CD8-positive, alpha-beta T cell (primary cell): ENCODE measurements at regions of chr4 and their contacts with region 1.

Region 1: DNA sequence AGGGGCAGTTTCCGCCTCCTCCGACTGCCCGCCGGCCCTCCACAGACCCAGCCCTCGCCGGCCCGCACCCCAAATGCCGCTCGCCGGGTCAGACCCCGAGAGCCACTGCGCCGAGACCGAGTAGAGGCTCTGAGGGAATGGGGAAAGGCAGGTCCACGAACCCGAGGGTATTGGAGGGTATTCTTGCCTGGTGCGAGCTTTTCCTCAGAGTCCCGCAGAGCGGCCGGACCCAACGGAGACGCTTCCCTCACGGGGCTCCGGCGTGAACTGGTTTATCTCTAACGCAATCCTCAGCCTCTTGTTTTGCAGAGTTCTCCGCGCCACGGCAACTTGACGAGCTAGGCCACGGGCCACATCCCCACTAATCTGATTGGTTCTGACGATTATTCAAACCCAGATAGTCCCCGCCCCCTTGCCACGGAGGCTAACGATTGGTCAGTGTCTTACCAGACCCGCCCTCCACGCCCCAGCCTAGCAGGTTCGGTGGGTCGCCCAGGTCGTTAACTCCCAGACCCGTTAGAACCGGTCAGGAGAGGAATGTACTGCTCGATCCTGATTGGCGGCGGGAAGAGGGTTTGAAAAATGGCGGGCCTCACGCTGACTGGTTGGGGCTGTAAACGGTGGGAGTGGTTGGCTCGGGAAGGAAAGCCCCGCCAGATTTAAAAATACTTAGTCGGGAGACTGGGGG is at the start of gene HMGB2:
- DNase-seq: peak; percentile 99 to 100 (median 100)
- ATAC-seq: peak; percentile 93
- H3K4me3 ChIP-seq: peak within 1 kb of the TSS; percentile 88 to 94
- H3K4me3 Mint-ChIP-seq: peak within 1 kb of the TSS; percentile 99
- H3K27ac ChIP-seq: peak within 1 kb of the TSS; percentile 94 to 96
- H3K27ac Mint-ChIP-seq: peak within 1 kb of the TSS; percentile 97
- H3K4me1 ChIP-seq: peaks cover 22% of the 10 kb centered on the region
- H3K4me1 Mint-ChIP-seq: peaks cover 23% of the 10 kb centered on the region
- H3K27me3 ChIP-seq: no peaks in the 10 kb centered on the region
- H3K27me3 Mint-ChIP-seq: peaks cover 10% of the 10 kb centered on the region
- CTCF ChIP-seq: no peak
- total RNA-seq, gene HMGB2: 172 to 179 TPM

Region 2: DNA sequence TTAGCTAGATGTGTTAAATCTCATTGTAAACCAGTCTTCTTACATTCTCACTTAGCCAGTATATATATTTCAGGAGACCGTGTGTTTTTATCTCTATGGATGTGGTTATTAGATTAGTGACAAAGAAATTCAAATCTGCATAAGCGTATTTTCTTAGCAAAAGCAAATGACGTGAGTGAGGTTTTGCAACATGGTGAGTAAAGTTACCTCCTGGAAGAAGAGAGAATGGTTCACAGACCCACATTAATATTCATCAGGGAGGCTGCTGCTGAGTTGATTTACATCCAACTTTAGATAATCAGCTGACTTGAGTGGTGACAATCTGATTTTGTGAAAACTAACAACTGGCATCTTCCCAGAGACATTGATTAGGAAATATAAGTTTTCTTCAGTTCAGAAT is 755.5 kb before region 1 on chr4:
- CTCF ChIA-PET with region 1: no interaction called
- POLR2A ChIA-PET with region 1: no interaction called
- intact Hi-C with region 1: no loop called
- DNase-seq: no peak
- ATAC-seq: no peak
- H3K4me3 ChIP-seq: no peak overlapping the region
- H3K4me3 Mint-ChIP-seq: no peak overlapping the region
- H3K27ac ChIP-seq: no peak overlapping the region
- H3K27ac Mint-ChIP-seq: no peak overlapping the region
- H3K4me1 ChIP-seq: no peaks in the 10 kb centered on the region
- H3K4me1 Mint-ChIP-seq: no peaks in the 10 kb centered on the region
- H3K27me3 ChIP-seq: no peaks in the 10 kb centered on the region
- H3K27me3 Mint-ChIP-seq: no peaks in the 10 kb centered on the region
- CTCF ChIP-seq: no peak

Region 3: DNA sequence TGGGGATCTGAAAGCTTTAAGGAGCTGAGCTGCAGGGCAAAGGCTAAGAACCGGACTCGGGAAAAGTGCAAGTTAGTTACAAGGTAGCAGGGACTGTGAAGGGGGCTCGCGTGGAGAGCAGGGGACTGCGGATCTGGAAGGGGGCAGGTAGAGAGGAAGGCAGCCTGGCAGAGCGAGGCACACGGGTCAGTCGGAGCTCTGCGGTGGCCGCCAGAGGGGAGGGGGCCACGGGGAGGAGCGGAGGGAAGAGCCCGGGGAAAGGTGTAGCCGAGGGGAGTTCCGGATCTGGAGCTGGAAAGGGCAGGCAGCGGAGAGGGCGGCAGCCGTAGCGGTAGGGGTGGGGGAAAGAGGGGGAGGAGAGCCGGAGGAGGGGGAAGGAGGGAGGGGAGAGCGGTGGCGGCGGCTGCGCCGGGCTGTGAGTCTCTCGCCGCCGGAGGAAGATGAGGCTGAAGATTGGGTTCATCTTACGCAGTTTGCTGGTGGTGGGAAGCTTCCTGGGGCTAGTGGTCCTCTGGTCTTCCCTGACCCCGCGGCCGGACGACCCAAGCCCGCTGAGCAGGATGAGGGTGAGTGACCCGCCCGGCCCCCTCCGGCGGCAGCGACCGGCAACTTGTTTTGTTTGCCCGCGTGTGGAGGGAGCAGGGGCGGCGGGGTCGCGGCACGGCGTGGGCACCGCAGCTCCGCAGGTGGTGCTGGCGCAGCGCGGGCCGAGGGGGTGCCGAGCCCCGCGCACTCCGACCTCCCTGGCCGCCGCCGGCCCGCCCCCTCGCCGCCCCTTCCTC is 165.6 kb before region 1 on chr4 and contains the start of gene GALNT7:
- CTCF ChIA-PET with region 1: interaction called, 3 read pairs
- POLR2A ChIA-PET with region 1: interaction called, 17 read pairs
- intact Hi-C with region 1: loop called in 1 of 2 experiments (anchors 5 kb)
- DNase-seq: peak in 8 of 9 experiments; percentile 43 to 81 (median 66)
- ATAC-seq: peak; percentile 61
- H3K4me3 ChIP-seq: peak within 1 kb of the TSS; percentile 65 to 89
- H3K4me3 Mint-ChIP-seq: peak within 1 kb of the TSS; percentile 96
- H3K27ac ChIP-seq: peak within 1 kb of the TSS; percentile 42 to 68
- H3K27ac Mint-ChIP-seq: peak within 1 kb of the TSS; percentile 94
- H3K4me1 ChIP-seq: peaks cover 18% of the 10 kb centered on the region
- H3K4me1 Mint-ChIP-seq: peaks cover 48% of the 10 kb centered on the region
- H3K27me3 ChIP-seq: no peaks in the 10 kb centered on the region
- H3K27me3 Mint-ChIP-seq: no peaks in the 10 kb centered on the region
- CTCF ChIP-seq: no peak
- total RNA-seq, gene GALNT7: 4.4 to 7.3 TPM

Region 4: DNA sequence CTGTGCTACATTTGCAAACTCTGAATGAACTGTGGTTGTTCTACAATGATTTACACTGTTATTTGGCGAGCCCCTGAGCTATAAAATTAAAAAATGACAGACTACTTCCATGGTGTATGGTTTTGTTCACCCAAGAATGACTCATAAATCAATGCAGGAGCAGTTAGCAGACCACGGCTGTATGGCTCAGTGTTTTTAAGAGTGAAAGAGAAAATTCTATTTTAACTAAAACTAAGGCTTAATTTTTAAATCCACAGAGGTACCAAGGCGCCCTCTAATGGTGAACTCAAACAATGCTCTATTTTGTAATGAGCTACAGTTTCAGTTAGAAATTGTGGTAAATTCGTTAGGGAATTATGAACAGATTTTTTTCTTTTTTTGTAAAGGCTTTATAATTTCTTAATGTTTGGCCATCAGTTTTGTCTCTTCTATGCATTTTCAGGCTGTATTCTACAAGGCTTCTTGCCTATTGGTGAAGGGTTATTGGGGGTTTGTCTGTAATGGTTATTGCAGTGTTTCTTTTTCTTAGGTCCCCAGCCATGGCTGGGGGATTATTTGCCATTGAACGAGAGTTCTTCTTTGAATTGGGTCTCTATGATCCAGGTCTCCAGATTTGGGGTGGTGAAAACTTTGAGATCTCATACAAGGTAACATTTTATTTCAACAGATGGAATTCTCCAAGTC is 32.6 kb before region 1 on chr4:
- CTCF ChIA-PET with region 1: no interaction called
- POLR2A ChIA-PET with region 1: no interaction called
- intact Hi-C with region 1: no loop called
- DNase-seq: peak in 2 of 9 experiments; percentile 37 to 48
- ATAC-seq: peak; percentile 51
- H3K4me3 ChIP-seq: no peak overlapping the region
- H3K4me3 Mint-ChIP-seq: no peak overlapping the region
- H3K27ac ChIP-seq: no peak overlapping the region
- H3K27ac Mint-ChIP-seq: peak overlapping the region; percentile 4
- H3K4me1 ChIP-seq: no peaks in the 10 kb centered on the region
- H3K4me1 Mint-ChIP-seq: no peaks in the 10 kb centered on the region
- H3K27me3 ChIP-seq: no peaks in the 10 kb centered on the region
- H3K27me3 Mint-ChIP-seq: no peaks in the 10 kb centered on the region
- CTCF ChIP-seq: peak; percentile 90

Region 5: DNA sequence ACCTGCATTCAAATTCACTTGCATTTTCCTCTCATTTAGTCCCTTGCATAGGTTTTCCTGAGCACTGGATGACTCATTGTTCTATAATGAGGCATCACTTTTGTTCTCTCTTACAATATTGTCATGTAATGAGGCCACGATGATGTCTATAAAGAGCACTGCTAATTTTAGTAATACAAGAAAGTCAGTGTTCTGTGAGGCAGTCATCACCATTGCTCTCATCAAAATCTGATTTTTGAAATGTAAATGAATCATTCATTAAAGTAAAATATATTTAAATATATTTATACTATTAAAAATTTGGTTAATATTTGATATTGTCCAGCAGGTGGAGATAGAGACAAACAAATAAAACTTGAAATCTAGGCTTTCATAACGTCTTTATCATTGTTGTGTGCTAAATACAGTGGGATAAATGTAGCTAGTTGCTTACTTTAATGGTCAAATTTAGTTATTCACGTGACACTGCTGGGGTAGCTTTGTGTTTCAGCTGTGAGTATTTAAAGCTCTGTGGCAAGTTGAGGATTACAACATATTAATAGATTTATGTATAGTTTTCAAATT is 15.5 kb before region 1 on chr4:
- CTCF ChIA-PET with region 1: interaction called, 23 read pairs
- POLR2A ChIA-PET with region 1: interaction called, 8 read pairs
- intact Hi-C with region 1: loop called in 1 of 2 experiments (anchors 2 kb)
- DNase-seq: peak in 2 of 9 experiments; percentile 48 to 60
- ATAC-seq: peak; percentile 66
- H3K4me3 ChIP-seq: no peak overlapping the region
- H3K4me3 Mint-ChIP-seq: no peak overlapping the region
- H3K27ac ChIP-seq: no peak overlapping the region
- H3K27ac Mint-ChIP-seq: no peak overlapping the region
- H3K4me1 ChIP-seq: no peaks in the 10 kb centered on the region
- H3K4me1 Mint-ChIP-seq: no peaks in the 10 kb centered on the region
- H3K27me3 ChIP-seq: no peaks in the 10 kb centered on the region
- H3K27me3 Mint-ChIP-seq: no peaks in the 10 kb centered on the region
- CTCF ChIP-seq: peak; percentile 66

Region 6: DNA sequence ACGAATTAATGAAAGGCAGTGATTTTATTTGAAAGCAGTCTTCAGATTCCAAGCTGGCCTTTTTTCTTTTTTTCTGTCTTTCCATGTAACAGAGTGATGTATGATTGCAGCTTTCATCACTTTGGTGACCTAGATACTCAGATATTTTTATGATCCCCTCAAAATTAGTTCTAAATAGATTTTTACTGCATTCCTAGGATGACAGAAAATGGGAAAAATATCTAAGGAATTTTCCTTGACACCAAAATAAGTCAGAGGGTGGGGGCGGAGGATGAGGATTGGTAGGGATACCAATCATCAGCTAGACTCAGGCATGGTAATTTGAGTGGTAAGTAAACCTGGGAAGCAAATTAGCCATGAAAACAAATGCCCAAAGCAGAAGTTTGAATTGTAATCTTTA is 11.8 kb after region 1 on chr4:
- CTCF ChIA-PET with region 1: no interaction called
- POLR2A ChIA-PET with region 1: interaction called, 12 read pairs
- intact Hi-C with region 1: no loop called
- DNase-seq: no peak
- ATAC-seq: no peak
- H3K4me3 ChIP-seq: no peak overlapping the region
- H3K4me3 Mint-ChIP-seq: no peak overlapping the region
- H3K27ac ChIP-seq: no peak overlapping the region
- H3K27ac Mint-ChIP-seq: no peak overlapping the region
- H3K4me1 ChIP-seq: no peaks in the 10 kb centered on the region
- H3K4me1 Mint-ChIP-seq: no peaks in the 10 kb centered on the region
- H3K27me3 ChIP-seq: no peaks in the 10 kb centered on the region
- H3K27me3 Mint-ChIP-seq: peaks cover 9% of the 10 kb centered on the region
- CTCF ChIP-seq: no peak

Region 7: DNA sequence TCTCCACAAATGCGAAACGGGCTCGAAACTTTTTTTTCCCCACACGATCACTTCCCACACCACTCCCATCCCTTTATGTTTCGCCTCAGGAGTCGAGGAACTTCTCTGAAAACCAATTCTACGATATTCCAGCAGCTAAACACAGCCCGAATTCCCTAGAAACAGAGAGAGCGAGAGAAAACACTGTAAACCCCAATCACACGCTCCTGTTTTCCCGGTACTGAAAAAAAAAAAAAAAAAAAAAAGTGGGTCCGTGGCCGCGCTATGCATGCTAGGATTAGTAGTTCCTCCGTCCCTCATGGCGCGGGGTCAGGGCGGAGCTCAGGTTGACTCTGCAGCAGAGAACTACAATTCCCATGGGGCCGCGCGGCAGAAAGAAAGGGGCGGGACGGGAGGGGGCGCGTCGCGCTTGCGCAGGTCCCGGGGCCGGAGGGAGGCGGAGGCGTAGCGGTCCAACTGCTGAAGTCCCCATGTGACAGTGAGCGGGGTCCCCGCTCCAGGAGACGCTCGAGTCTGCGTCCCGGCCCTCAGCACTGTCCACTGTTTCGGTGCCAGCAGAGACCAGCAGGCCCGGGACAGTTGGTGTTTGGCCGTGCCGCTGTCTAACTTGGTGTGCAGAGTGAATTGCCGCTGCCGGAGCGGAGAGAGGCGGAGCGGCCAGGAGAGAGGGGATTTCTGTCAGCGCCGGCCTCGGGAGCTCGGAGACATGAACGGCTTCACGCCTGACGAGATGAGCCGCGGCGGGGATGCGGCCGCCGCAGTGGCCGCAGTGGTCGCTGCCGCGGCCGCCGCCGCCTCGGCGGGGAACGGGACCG is 36.5 kb after region 1 on chr4 and contains the start of gene SAP30:
- CTCF ChIA-PET with region 1: interaction called, 8 read pairs
- POLR2A ChIA-PET with region 1: interaction called, 128 read pairs
- intact Hi-C with region 1: loop called (anchors 1 kb)
- DNase-seq: peak; percentile 95 to 98 (median 98)
- ATAC-seq: peak; percentile 85
- H3K4me3 ChIP-seq: peak within 1 kb of the TSS; percentile 77 to 93
- H3K4me3 Mint-ChIP-seq: peak within 1 kb of the TSS; percentile 98
- H3K27ac ChIP-seq: peak within 1 kb of the TSS; percentile 78 to 85
- H3K27ac Mint-ChIP-seq: peak within 1 kb of the TSS; percentile 96
- H3K4me1 ChIP-seq: peaks cover 15% of the 10 kb centered on the region
- H3K4me1 Mint-ChIP-seq: peaks cover 34% of the 10 kb centered on the region
- H3K27me3 ChIP-seq: peaks cover 4 to 5% of the 10 kb centered on the region in 2 experiments
- H3K27me3 Mint-ChIP-seq: peaks cover 13% of the 10 kb centered on the region
- CTCF ChIP-seq: no peak
- total RNA-seq, gene SAP30: 3.6 to 3.7 TPM

Region 8: GRCh38 chr4:173494013-173494970 is 160.1 kb after region 1 on chr4:
- CTCF ChIA-PET with region 1: no interaction called
- POLR2A ChIA-PET with region 1: no interaction called
- intact Hi-C with region 1: loop called in 1 of 2 experiments (anchors 1 kb)
- DNase-seq: peak in 8 of 9 experiments; percentile 29 to 80 (median 54)
- ATAC-seq: peak; percentile 92
- H3K4me3 ChIP-seq: peak overlapping the region; percentile 40 to 42
- H3K4me3 Mint-ChIP-seq: peak overlapping the region; percentile 77
- H3K27ac ChIP-seq: no peak overlapping the region
- H3K27ac Mint-ChIP-seq: no peak overlapping the region
- H3K4me1 ChIP-seq: peaks cover 4% of the 10 kb centered on the region
- H3K4me1 Mint-ChIP-seq: peaks cover 7% of the 10 kb centered on the region
- H3K27me3 ChIP-seq: no peaks in the 10 kb centered on the region
- H3K27me3 Mint-ChIP-seq: peaks cover 40% of the 10 kb centered on the region
- CTCF ChIP-seq: peak; percentile 55

Region 9: GRCh38 chr4:173935622-173936405 is 601.6 kb after region 1 on chr4:
- CTCF ChIA-PET with region 1: no interaction called
- POLR2A ChIA-PET with region 1: no interaction called
- intact Hi-C with region 1: no loop called
- DNase-seq: no peak
- ATAC-seq: no peak
- H3K4me3 ChIP-seq: no peak overlapping the region
- H3K4me3 Mint-ChIP-seq: no peak overlapping the region
- H3K27ac ChIP-seq: no peak overlapping the region
- H3K27ac Mint-ChIP-seq: no peak overlapping the region
- H3K4me1 ChIP-seq: no peaks in the 10 kb centered on the region
- H3K4me1 Mint-ChIP-seq: no peaks in the 10 kb centered on the region
- H3K27me3 ChIP-seq: no peaks in the 10 kb centered on the region
- H3K27me3 Mint-ChIP-seq: no peaks in the 10 kb centered on the region
- CTCF ChIP-seq: no peak

Region 10: DNA sequence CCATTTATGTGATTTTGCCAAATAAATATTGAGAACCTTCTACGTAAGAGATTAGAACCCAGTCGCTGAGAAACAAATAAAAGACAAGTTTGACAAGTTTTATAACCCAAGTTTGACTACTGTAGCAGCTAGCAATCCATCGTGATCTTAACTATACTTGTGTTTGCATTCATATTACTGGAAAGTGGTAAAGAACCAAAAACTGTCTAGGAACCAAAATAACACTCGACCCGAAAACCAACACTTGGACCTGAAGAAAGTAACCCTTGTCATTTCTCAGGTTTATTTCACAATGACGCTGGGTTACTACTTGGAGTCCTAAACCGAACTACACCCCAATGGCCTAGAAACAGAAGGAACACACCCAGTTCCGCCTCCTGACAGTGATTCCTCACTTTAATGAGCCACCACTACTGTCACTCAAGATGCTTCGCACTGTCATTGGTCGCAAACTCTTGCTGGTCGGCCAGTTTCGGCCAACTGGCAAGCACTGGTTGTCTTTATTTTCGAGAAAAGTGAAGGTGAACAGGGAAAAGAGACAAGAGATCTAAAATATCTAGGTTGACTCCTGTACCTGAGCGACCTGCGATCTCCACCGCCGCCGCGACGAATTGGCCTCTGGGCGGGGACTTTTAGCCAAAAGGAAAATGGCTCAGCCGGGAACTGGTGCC is 948.7 kb after region 1 on chr4:
- CTCF ChIA-PET with region 1: no interaction called
- POLR2A ChIA-PET with region 1: interaction called, 6 read pairs
- intact Hi-C with region 1: loop called (anchors 2 to 10 kb)
- DNase-seq: peak; percentile 61 to 94 (median 80)
- ATAC-seq: peak; percentile 93
- H3K4me3 ChIP-seq: peak overlapping the region; percentile 88 to 99
- H3K4me3 Mint-ChIP-seq: peak overlapping the region; percentile 100
- H3K27ac ChIP-seq: peak overlapping the region; percentile 98 to 100
- H3K27ac Mint-ChIP-seq: peak overlapping the region; percentile 100
- H3K4me1 ChIP-seq: peaks cover 14% of the 10 kb centered on the region
- H3K4me1 Mint-ChIP-seq: peaks cover 76% of the 10 kb centered on the region
- H3K27me3 ChIP-seq: no peaks in the 10 kb centered on the region
- H3K27me3 Mint-ChIP-seq: no peaks in the 10 kb centered on the region
- CTCF ChIP-seq: no peak